ENCODE measurements at regions of chr1 and their contacts with region 1.

Region 1: GRCh38 chr1:223683586-223684487 is 18.3 kb upstream of the CAPN8 start:
- DNase-seq: peak in 4 of 5 donors; percentile 21 to 51 (median 34)
- ATAC-seq: peak; percentile 26 to 67 (median 44)
- H3K4me3 ChIP-seq: no peak overlapping the region
- H3K27ac ChIP-seq: no peak overlapping the region
- H3K4me1 ChIP-seq: peaks cover 0 to 4% (median 0%) of the 10 kb centered on the region in 12 donors
- H3K27me3 ChIP-seq: peaks cover 0 to 9% (median 0%) of the 10 kb centered on the region in 9 donors
- CTCF ChIP-seq: peak; percentile 34 to 70 (median 59)
- POLR2A ChIP-seq: no peak

Region 2: DNA sequence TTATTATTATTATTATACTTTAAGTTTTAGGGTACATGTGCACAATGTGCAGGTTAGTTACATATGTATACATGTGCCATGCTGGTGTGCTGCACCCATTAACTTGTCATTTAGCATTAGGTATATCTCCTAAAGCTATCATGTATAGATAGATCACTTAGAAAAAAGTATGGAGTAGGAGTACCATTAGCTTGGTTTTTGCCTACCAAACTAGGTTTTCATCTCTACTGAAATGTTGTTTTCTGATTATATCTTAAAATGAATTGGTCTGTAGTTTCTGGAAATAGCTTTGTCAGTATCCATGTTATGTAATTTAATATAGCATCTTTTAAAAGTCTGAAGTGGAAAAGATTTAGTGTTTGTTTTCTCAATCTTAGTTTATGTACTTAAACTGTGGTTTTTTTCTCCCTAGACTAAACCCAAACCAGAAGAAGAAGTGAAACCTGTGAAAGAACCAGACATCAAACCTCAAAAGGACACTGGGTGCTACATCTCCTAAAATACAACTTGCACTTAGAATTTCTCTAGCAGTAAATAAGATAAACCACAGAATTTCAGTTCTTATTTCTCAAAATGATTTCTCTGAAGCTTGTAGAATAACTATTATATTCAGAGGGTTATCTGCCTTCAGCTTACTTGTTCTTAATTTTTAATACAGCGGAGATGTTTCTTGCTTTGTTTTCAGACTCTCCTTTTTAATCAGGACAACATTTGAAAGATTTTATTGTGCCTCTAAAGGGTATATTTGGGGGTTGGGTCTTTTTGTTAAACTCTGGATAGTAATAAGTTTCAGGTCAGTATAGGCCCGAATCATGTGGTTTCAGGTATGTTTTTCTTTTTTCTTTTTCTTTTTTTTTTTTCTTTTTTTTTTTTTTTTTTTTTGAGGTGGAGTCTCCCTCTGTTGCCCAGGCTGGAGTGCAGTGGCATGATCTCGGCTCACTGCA is 951.3 kb before region 1 on chr1:
- intact Hi-C with region 1: loop called in 3 of 10 experiments (anchors 5 to 10 kb)
- DNase-seq: no peak
- ATAC-seq: no peak
- H3K4me3 ChIP-seq: no peak overlapping the region
- H3K27ac ChIP-seq: no peak overlapping the region
- H3K4me1 ChIP-seq: peaks cover 0 to 8% (median 0%) of the 10 kb centered on the region in 12 donors
- H3K27me3 ChIP-seq: no peaks in the 10 kb centered on the region
- CTCF ChIP-seq: no peak
- POLR2A ChIP-seq: no peak

Region 3: DNA sequence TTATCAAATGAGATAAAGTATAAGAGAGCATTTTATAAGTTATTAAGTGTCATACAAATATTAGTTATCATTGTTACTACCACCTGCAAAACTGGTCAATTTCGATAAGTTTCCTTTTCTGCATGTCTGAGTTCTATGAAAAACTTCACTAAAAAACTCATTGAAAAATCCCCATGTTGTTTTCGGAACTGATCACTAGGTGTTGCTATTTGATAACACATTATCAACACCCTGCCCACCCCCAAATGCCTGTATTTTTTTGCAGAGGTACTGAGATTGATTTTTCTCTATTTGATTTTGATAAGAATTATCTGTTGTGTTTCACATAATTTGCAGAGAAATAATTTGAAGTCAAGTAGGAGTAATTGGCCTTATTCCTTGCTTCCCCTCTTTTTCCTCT is 891.1 kb before region 1 on chr1:
- intact Hi-C with region 1: loop called in 1 of 10 experiments (anchors 10 kb)
- DNase-seq: no peak
- ATAC-seq: no peak
- H3K4me3 ChIP-seq: no peak overlapping the region
- H3K27ac ChIP-seq: no peak overlapping the region
- H3K4me1 ChIP-seq: peaks cover 0 to 4% (median 0%) of the 10 kb centered on the region in 12 donors
- H3K27me3 ChIP-seq: no peaks in the 10 kb centered on the region
- CTCF ChIP-seq: peak; percentile 9 to 74 (median 61)
- POLR2A ChIP-seq: no peak

Measured in heart left ventricle (tissue), 16 donors.